Vagina (tissue), 2 donors: ENCODE measurements at regions of chr4 and their contacts with region 1.

Region 1: GRCh38 chr4:184263910-184264732 is 46.4 kb upstream of the ENPP6 start:
- DNase-seq: peak; percentile 89 to 95
- H3K4me3 ChIP-seq: no peak overlapping the region
- H3K27ac ChIP-seq: no peak overlapping the region
- H3K4me1 ChIP-seq: no peaks in the 10 kb centered on the region
- H3K27me3 ChIP-seq: no peaks in the 10 kb centered on the region
- CTCF ChIP-seq: peak; percentile 81 to 91 (median 84)
- POLR2A ChIP-seq: no peak

Region 2: GRCh38 chr4:184544788-184545409 is 280.8 kb after region 1 on chr4:
- intact Hi-C with region 1: loop called (anchors 5 kb)
- DNase-seq: no peak
- H3K4me3 ChIP-seq: no peak overlapping the region
- H3K27ac ChIP-seq: no peak overlapping the region
- H3K4me1 ChIP-seq: no peaks in the 10 kb centered on the region
- H3K27me3 ChIP-seq: no peaks in the 10 kb centered on the region
- CTCF ChIP-seq: no peak
- POLR2A ChIP-seq: no peak

Region 3: DNA sequence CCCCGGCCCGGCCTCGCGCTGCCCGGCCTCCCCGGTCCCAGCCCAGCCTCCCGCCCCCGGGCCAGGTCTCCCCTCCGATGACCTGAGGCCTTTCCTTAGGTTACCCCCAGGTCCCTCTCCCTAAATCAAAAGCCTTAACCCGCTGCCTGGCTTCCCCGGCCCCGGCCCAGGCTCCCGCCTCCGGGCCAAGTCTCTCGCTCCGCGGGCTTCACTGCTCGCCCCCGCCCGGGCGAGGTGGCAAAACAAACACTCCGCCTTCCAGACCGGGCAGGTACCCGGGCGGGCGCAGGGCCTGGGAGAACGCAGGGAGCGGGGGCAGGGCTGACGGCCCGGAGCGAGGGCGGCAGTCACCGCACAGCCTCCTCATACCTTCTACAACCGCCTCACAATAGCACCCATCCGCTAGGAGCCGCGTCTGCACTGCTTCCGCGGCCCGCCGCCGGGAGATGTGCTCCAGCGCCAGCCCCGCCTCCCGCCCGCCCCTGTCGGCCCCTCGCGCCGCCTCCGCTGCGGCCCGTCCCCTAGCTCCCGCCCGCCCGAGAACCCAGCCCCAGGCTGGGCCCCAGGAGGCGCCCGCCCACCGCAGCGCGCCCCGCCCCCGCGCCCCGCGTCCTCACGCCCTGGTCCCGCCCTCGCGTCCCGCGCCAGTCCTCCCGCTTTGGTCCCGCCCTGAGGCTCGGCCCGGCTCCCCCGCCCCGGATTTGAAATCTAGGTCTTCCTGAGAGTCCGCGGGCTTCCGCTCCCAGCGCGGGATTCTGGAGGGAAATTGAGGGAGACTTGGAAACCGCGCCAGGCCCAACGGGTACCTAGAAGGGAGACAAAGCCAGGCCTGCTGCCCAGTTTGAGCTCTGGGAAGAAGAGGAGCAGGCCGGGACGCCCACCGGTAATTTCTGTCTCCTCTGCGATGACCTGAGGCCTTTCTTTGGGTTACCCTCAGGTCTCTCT is 385.2 kb after region 1 on chr4 and contains the starts of genes CASP3 and PRIMPOL:
- intact Hi-C with region 1: loop called (anchors 10 kb)
- DNase-seq: peak in 1 of 2 donors; percentile 96
- H3K4me3 ChIP-seq: peak within 1 kb of the TSS; percentile 89 to 96
- H3K27ac ChIP-seq: peak within 1 kb of the TSS; percentile 96
- H3K4me1 ChIP-seq: peaks cover 45% of the 10 kb centered on the region
- H3K27me3 ChIP-seq: no peaks in the 10 kb centered on the region
- CTCF ChIP-seq: peak in 2 of 3 experiments; percentile 17 to 30
- POLR2A ChIP-seq: peak in 1 of 2 donors; percentile 91
- total RNA-seq, gene CASP3: 11.3 TPM
- total RNA-seq, gene PRIMPOL: 14.0 TPM